Left ventricle myocardium superior (tissue), 1 donor: ENCODE measurements at regions of chr2 and their contacts with region 1.

Region 1: DNA sequence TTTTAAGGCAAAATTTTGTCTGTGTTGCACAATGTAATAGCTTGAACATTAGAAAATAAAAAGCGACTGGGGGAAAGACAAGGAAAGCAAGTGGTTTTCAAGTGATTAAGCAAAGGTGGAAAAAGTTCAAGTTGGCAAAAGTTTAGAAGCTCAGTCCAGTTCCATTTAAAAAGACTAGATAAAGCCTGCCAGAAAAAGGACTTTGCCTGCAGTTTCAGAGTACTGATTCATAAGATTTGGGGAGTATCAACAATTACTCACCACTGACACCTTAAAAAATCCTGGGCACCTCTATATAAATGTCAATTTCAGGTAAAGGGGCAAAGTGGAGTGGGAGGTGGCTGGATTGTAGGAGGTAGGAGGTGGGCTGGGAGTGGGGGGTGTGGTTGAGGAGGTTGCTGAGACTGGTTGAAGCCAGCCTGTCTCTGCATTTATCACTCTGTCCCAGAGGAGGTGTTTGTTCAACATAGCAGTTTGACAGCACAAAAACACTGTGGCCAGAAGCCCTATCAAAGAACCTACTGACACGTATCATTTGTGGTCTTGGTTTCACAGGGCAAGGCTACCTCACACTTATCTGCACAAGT is 14.6 kb downstream of the ZEB2 start:
- DNase-seq: peak; percentile 43
- ATAC-seq: peak; percentile 69

Region 2: GRCh38 chr2:143891879-143892308 is 613.4 kb before region 1 on chr2:
- intact Hi-C with region 1: no loop called
- DNase-seq: no peak
- ATAC-seq: no peak

Region 3: DNA sequence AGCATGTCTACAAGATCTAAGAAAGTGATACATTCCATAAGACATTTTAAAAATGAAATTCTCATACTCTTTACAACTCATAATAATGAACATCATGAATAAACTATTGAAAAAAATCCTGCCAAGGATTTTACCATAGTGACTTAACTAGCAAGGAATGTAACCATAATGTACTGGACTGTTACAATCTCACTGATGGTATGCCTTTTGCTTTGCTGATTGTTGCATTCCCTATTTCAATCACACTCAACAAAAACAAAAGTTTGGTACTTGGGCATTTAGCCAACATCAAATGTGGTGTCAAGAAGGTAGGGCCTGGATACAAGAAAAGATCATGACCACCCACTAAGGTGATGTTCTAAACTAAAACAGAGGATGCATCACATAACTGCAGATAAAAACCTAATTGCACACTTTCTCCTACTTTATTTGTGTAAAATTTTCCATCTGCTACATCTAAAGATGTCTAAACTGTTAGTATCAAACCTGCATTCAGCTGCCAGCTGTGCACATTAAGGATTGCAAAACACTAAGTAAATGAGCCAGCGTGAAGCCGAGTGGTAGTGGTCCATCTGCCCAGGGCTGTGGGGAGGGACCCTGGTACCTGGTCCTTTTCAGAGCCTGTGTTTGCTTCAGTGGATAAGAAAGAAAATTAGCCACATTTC is 549.8 kb before region 1 on chr2:
- intact Hi-C with region 1: no loop called
- DNase-seq: no peak
- ATAC-seq: no peak

Region 4: GRCh38 chr2:144170179-144170815 is 335.0 kb before region 1 on chr2:
- intact Hi-C with region 1: no loop called
- DNase-seq: no peak
- ATAC-seq: no peak

Region 5: GRCh38 chr2:144357623-144358373 is 147.5 kb before region 1 on chr2:
- intact Hi-C with region 1: no loop called
- DNase-seq: no peak
- ATAC-seq: peak; percentile 85

Region 6: DNA sequence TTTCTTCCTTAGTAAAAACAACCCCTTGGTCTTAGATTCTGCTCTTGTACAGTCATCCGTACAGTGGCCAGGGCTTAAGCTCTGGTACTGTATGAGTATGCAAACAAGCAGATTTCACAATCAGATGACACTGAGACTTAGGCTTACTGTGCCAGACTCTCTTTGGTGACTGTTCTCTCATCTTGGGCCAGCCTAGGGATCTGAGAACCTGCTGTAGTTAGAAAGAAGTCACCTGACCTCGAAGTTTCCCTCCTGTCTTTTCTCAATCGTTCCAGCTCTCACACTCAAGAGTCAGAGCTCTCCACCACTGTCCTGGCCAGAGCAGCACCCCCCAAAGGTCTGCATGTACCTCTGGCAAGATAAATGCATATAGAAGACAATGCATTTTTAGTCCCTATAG is 48.7 kb before region 1 on chr2:
- intact Hi-C with region 1: loop called (anchors 10 kb)
- DNase-seq: peak; percentile 21
- ATAC-seq: peak; percentile 71